ENCODE measurements at regions of chr9 and their contacts with region 1.

Region 1: DNA sequence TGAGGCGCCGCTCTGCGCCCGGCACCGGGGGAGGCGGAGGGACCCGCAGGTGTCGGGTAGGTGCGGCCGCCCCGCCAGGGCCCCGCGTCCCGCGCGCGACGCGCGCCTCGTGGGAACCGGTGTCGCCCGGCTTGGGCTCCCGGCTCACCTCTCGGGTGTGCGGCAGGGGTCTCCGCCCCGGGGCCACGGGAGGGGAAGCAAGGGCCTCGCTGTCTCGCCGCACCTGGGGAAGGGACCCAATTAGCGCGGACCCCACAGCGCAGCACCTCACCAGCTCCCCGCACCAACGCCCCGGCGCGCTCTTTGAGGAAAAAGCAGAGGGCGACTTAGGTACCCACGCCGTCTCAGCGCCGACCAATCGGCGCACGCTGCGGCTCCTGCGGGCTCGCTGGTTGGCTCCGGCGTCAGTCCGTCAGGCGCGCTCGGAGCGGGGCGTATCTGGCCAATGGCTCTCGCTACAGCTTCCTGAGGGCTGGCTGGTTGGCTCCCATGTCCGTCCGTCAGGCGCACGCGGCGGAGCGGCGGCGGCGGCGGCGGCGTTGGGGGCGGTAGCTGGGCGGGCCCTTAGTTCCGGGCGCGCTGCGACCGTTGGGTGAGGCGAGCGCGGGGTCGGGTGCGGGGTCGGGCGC is at the start of gene TRAF2:
- DNase-seq: peak; percentile 96 to 99
- H3K4me3 ChIP-seq: peak within 1 kb of the TSS; percentile 96
- H3K27ac ChIP-seq: peak within 1 kb of the TSS; percentile 46
- H3K4me1 ChIP-seq: peaks cover 39% of the 10 kb centered on the region
- H3K27me3 ChIP-seq: no peaks in the 10 kb centered on the region
- CTCF ChIP-seq: no peak
- total RNA-seq, gene TRAF2: 42.7 and 48.0 TPM in 2 replicates

Region 2: GRCh38 chr9:136799854-136800657 is 86.0 kb before region 1 on chr9:
- CTCF ChIA-PET with region 1: no interaction called
- POLR2A ChIA-PET with region 1: interaction called, 12 read pairs
- intact Hi-C with region 1: no loop called
- DNase-seq: peak; percentile 81 to 91
- H3K4me3 ChIP-seq: peak overlapping the region; percentile 69
- H3K27ac ChIP-seq: no peak overlapping the region
- H3K4me1 ChIP-seq: peaks cover 21% of the 10 kb centered on the region
- H3K27me3 ChIP-seq: no peaks in the 10 kb centered on the region
- CTCF ChIP-seq: no peak

Region 3: GRCh38 chr9:136865735-136866103 is 20.3 kb before region 1 on chr9:
- CTCF ChIA-PET with region 1: no interaction called
- POLR2A ChIA-PET with region 1: interaction called, 17 read pairs
- intact Hi-C with region 1: loop called (anchors 1 kb)
- DNase-seq: no peak
- H3K4me3 ChIP-seq: peak overlapping the region; percentile 98
- H3K27ac ChIP-seq: peak overlapping the region; percentile 54; the same call in 1 of the 2 replicates
- H3K4me1 ChIP-seq: peaks cover 16% of the 10 kb centered on the region
- H3K27me3 ChIP-seq: no peaks in the 10 kb centered on the region
- CTCF ChIP-seq: no peak

Region 4: GRCh38 chr9:136902259-136902821 is 16.3 kb after region 1 on chr9:
- CTCF ChIA-PET with region 1: no interaction called
- POLR2A ChIA-PET with region 1: interaction called, 19 read pairs
- intact Hi-C with region 1: loop called (anchors 1 kb)
- DNase-seq: peak; percentile 84 to 87
- H3K4me3 ChIP-seq: peak overlapping the region; percentile 44; the same call in 1 of the 2 replicates
- H3K27ac ChIP-seq: peak overlapping the region; percentile 99
- H3K4me1 ChIP-seq: peaks cover 44% of the 10 kb centered on the region
- H3K27me3 ChIP-seq: no peaks in the 10 kb centered on the region
- CTCF ChIP-seq: no peak; the same call in 1 of the 2 replicates

Region 5: DNA sequence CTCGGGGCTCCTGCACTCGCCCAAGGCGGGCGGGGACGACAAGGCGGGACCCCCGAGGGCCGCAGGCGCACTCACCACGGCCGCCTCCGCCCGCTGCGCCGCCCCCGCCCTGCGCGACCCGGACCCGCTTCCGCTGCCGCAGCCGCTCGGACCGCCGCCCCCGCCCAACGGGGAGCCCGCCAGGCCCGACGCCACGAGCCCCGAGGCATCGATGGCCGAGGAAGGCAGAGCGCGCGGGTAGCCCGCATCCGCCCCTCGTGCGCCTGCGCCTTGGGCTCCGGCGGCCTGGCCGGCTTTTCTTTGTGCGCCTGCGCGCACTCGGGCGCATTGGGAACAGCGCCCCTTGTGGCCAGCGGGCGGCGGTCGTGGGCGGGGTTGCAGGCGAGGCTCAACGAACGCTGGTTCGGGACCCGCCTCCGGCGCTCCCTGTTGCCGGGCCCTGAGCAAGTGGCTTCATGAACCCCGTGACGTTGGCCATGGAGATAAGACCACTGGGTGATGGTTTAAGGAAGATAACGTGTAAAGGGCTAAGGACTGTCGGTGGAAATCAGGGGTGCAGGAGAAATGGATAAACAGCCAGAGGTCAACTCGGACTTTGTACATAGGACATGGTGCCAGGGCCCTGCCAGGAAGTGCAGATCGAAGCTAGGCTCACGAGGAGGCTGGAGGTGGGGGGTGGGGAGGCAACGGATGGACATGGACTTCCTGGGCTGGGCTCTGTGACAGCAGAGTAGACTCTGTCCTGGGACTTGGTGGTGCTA is 58.6 kb after region 1 on chr9 and contains the starts of genes C8G and FBXW5:
- CTCF ChIA-PET with region 1: no interaction called
- POLR2A ChIA-PET with region 1: no interaction called
- intact Hi-C with region 1: loop called (anchors 5 kb)
- DNase-seq: peak; percentile 75 to 98
- H3K4me3 ChIP-seq: peak within 1 kb of the TSS; percentile 87
- H3K27ac ChIP-seq: peak within 1 kb of the TSS; percentile 26; the same call in 1 of the 2 replicates
- H3K4me1 ChIP-seq: peaks cover 21% of the 10 kb centered on the region
- H3K27me3 ChIP-seq: no peaks in the 10 kb centered on the region
- CTCF ChIP-seq: peak; percentile 93
- total RNA-seq, gene C8G: 2.3 and 4.4 TPM in 2 replicates
- total RNA-seq, gene FBXW5: 101 and 125 TPM in 2 replicates

Region 6: GRCh38 chr9:137000177-137000883 is 114.3 kb after region 1 on chr9:
- CTCF ChIA-PET with region 1: no interaction called
- POLR2A ChIA-PET with region 1: no interaction called
- intact Hi-C with region 1: no loop called
- DNase-seq: no peak
- H3K4me3 ChIP-seq: no peak overlapping the region
- H3K27ac ChIP-seq: no peak overlapping the region
- H3K4me1 ChIP-seq: peaks cover 30% of the 10 kb centered on the region
- H3K27me3 ChIP-seq: no peaks in the 10 kb centered on the region
- CTCF ChIP-seq: no peak

Measured in PC-9 (cell line).